ENCODE measurements at regions of chr22 and their contacts with region 1.

Region 1: GRCh38 chr22:29031227-29032011 is 30.2 kb downstream of the C22orf31 start:
- DNase-seq: no peak
- H3K4me3 ChIP-seq: peak overlapping the region; percentile 56 to 62 (median 58)
- H3K27ac ChIP-seq: peak overlapping the region; percentile 77 to 84 (median 81)
- H3K4me1 ChIP-seq: peaks cover 26 to 40% (median 35%) of the 10 kb centered on the region in 4 donors
- H3K27me3 ChIP-seq: no peaks in the 10 kb centered on the region
- CTCF ChIP-seq: peak in 1 of 3 experiments; percentile 15
- EP300 ChIP-seq: no peak
- POLR2A ChIP-seq: no peak

Region 2: GRCh38 chr22:28582806-28583205 is 448.6 kb before region 1 on chr22:
- intact Hi-C with region 1: no loop called
- DNase-seq: no peak
- H3K4me3 ChIP-seq: no peak overlapping the region
- H3K27ac ChIP-seq: no peak overlapping the region
- H3K4me1 ChIP-seq: peaks cover 0 to 3% (median 0%) of the 10 kb centered on the region in 4 donors
- H3K27me3 ChIP-seq: no peaks in the 10 kb centered on the region
- CTCF ChIP-seq: no peak
- EP300 ChIP-seq: no peak
- POLR2A ChIP-seq: no peak

Region 3: DNA sequence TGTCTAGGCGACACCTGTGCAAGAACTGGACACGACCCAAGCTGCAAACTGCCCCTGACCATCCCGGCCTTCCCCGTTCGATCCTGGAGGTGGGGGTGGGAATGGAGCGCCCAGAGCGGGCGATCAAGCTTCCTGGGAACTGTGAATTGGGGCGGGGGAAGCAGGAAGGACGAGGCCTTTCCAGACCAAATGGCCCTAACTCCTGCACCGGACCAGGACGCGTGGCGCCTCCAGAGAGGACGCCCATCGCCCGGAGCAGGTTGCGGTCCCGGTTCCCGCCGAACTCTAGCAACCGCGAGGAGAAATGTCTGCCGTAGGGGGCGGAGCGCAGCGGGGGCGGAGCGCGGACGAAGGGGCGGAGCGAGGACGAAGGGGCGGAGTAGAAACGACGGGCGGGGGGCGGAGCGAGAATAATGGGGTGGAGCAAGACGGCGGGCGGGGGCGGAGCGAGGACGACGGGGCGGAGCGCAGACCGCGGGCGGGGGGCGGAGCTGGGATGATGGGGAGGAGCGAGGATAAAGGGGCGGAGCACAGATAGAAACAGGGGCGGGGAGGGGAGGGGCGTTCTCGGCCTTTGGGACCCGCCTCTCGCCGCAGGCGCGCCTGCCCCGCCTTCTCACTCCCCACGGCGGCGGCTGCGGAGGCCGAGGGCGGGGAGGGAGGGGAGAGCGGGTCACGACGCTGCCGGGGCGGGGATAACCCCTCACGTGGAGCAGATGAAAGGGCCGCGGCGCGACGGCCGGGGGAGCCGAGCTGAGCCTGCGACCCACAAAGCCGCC is 148.4 kb before region 1 on chr22 and contains the start of gene ZNRF3:
- intact Hi-C with region 1: loop called (anchors 10 kb)
- DNase-seq: peak; percentile 96
- H3K4me3 ChIP-seq: peak within 1 kb of the TSS; percentile 59 to 89 (median 74)
- H3K27ac ChIP-seq: peak within 1 kb of the TSS; percentile 76 to 86 (median 82)
- H3K4me1 ChIP-seq: peaks cover 16 to 49% (median 45%) of the 10 kb centered on the region in 4 donors
- H3K27me3 ChIP-seq: no peaks in the 10 kb centered on the region
- CTCF ChIP-seq: no peak
- EP300 ChIP-seq: no peak
- POLR2A ChIP-seq: no peak
- total RNA-seq, gene ZNRF3: 12.9 to 29.7 (median 21.9) TPM

Region 4: DNA sequence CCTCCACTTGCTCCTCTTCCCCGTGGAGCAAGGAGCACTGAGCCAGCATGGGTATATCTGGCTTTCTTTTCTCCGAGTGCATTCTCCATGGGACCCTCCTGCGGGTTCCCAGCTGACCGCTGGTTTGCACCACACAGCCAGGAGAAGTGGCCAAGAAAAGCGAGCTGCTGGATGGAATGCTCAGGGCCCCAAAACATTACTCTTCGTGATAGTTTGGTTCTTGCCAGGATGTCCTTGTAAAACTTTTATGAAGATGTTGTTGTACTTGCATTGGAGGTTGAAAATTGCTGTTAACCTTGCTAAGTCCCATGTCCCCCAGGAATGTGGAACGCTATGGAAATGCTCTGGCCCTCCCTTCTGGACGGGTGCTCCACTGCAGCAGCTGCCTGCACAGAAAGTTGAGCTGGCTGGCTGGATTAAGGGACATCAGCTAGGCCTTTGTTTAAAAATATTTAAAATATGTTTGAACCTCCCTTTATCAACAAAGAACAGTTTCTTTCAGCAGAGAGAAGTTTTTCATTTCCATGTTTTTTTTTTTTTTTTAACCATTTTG is 79.4 kb before region 1 on chr22:
- intact Hi-C with region 1: loop called (anchors 10 kb)
- DNase-seq: no peak
- H3K4me3 ChIP-seq: peak overlapping the region in 1 of 4 donors; percentile 18
- H3K27ac ChIP-seq: peak overlapping the region; percentile 15 to 67 (median 41)
- H3K4me1 ChIP-seq: peaks cover 15 to 71% (median 57%) of the 10 kb centered on the region in 4 donors
- H3K27me3 ChIP-seq: no peaks in the 10 kb centered on the region
- CTCF ChIP-seq: peak; percentile 34 to 63 (median 54)
- EP300 ChIP-seq: no peak
- POLR2A ChIP-seq: no peak